Right ventricle myocardium inferior (tissue), 1 donor: ENCODE measurements at regions of chr16 and their contacts with region 1.

Region 1: DNA sequence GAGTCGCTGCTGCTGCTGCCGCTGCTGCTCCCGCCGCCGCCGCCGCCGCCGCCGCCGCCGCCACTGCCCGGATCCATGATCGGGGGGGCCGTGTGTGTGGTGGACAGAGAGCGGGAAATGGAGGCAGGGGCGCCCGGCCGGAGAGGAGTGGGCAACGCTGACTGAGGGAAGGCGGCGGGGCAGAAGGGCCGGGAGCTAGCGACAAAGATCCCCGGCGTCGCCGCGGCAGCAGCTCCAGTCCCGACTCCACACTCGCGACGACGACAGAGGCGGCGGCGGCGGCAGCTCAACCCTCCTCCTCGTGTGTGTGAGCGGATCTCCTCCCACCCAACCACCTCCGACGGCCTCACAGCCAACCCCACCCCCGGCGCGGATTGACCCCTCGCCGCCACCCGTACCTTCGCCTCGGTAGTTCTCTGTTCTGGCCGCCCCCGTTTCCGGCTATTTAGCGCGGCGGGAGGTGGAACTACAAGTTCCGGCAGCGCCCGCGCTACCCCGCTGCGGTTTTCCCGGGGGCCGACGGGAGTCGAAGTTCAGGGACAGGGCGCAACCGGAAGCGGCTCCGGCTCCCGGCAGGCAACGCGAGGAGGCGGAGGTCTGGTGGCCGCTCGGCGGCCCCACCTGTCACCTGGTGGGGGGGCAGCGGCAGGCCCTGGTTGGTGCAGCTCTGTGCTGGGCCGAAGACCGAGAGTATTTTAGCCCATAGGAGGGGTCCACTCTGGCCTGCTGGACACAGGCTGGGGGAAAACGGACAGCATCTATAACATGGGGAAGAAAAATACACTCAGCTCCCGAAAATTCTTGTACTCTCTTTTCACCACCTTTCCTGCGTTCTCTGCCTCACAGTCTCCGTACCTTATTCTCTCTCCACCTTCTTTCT is at the start of gene GSPT1:
- DNase-seq: peak; percentile 100
- ATAC-seq: peak; percentile 98
- total RNA-seq, gene GSPT1: 91.4 TPM

Region 2: GRCh38 chr16:11851294-11852091 is 64.4 kb before region 1 on chr16 and contains the start of gene RSL1D1:
- intact Hi-C with region 1: loop called (anchors 5 kb)
- DNase-seq: peak; percentile 92
- ATAC-seq: peak; percentile 98
- total RNA-seq, gene RSL1D1: 111 TPM